ENCODE measurements at regions of chr2 and their contacts with region 1.

Region 1: DNA sequence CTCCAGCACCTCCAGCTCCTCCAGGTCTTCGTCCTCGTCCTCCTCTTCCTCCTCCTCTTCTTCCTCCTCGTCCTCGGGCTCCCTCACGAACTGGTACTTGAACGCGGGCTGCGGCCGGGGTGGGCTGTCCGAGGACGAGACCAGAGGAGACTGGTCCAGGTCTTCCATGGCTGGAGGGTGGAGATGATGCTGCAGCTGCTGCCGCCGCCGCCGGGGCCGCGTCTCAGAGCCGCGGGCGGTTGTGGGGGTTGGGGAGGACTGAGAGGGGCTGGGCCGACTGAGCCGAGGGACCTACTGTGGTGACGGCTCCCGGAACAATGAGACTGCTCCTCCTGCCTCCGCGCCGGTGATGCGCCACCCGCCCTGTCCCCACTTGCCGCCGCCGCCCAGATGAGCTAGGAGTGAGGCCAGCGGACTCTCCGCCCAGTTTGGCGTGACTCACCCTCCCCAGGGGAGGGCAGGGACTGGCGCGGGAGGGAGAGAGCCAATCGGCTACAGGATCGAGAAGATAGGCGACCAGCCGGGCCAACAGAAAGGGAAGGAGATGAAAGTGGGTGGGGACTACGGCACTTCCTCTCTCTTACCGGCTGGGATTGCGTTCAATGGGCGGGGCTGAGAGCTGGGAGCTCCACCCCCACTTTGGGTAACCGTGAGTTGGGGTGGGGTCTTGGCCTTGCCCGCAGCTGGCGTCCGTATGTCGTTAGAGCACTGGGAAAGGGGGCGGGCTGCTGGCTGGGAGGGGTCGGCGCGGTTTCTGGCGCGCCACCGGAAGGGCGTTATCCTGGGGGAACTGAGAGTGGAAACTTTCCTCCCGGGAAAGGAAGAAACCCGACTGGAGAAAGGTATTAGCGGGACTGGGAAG is at the start of gene RTN4:
- DNase-seq: peak; percentile 99
- H3K4me3 Mint-ChIP-seq: peak within 1 kb of the TSS; percentile 94
- H3K27ac Mint-ChIP-seq: peak within 1 kb of the TSS; percentile 99
- H3K4me1 Mint-ChIP-seq: peaks cover 24% of the 10 kb centered on the region
- H3K27me3 Mint-ChIP-seq: no peaks in the 10 kb centered on the region
- CTCF ChIP-seq: no peak
- total RNA-seq, gene RTN4: 389 and 391 TPM in 2 replicates

Region 2: DNA sequence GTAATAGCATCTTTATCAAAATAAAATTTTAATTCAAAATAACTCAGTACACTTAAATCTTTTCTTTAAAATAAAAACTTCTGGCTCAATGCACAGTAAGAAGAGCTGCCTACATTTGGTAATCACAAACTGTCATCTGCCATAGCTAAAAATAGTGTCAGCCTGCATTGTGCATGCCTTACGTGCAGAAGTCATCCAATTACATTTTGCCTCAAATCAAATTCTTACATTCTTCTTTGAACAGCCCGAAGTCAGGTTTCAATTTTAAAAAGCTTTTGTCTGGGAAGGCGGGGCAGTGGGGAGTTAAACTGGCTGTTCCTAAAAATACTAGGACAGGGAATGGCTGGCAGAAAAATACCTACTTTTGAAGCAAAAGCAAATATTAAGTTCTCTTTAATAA is 51.2 kb before region 1 on chr2:
- CTCF ChIA-PET with region 1: interaction called, 6 read pairs
- POLR2A ChIA-PET with region 1: interaction called, 16 read pairs
- intact Hi-C with region 1: no loop called
- DNase-seq: peak; percentile 68
- H3K4me3 Mint-ChIP-seq: peak overlapping the region; percentile 62
- H3K27ac Mint-ChIP-seq: peak overlapping the region; percentile 85
- H3K4me1 Mint-ChIP-seq: peaks cover 49% of the 10 kb centered on the region
- H3K27me3 Mint-ChIP-seq: no peaks in the 10 kb centered on the region
- CTCF ChIP-seq: no peak

Region 3: DNA sequence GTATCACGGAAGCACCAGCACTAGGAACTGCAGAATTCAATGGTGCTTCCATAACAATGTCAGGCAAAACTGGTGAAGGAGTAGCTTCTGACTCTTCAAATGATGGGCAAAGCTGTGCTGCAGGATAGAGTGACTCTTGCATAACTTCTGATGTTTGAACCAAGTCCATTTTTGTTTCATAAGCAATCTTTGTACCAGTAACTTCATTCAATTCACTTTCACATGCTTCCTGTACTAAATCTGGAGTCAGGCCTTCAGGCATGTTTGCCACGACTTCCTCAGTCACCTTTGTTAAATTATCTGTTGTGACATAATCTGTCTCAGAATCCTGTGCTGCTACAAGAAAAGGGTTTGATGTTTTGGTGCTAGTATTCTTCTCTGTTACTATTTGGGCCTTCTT is 24.2 kb before region 1 on chr2:
- CTCF ChIA-PET with region 1: interaction called, 12 read pairs
- POLR2A ChIA-PET with region 1: interaction called, 289 read pairs
- intact Hi-C with region 1: no loop called
- DNase-seq: peak; percentile 57
- H3K4me3 Mint-ChIP-seq: no peak overlapping the region
- H3K27ac Mint-ChIP-seq: no peak overlapping the region
- H3K4me1 Mint-ChIP-seq: peaks cover 7% of the 10 kb centered on the region
- H3K27me3 Mint-ChIP-seq: no peaks in the 10 kb centered on the region
- CTCF ChIP-seq: no peak

Region 4: GRCh38 chr2:55063713-55064323 is 13.5 kb after region 1 on chr2:
- CTCF ChIA-PET with region 1: interaction called, 6 read pairs
- POLR2A ChIA-PET with region 1: interaction called, 13 read pairs
- intact Hi-C with region 1: no loop called
- DNase-seq: no peak
- H3K4me3 Mint-ChIP-seq: no peak overlapping the region
- H3K27ac Mint-ChIP-seq: no peak overlapping the region
- H3K4me1 Mint-ChIP-seq: no peaks in the 10 kb centered on the region
- H3K27me3 Mint-ChIP-seq: no peaks in the 10 kb centered on the region
- CTCF ChIP-seq: peak; percentile 17

Region 5: DNA sequence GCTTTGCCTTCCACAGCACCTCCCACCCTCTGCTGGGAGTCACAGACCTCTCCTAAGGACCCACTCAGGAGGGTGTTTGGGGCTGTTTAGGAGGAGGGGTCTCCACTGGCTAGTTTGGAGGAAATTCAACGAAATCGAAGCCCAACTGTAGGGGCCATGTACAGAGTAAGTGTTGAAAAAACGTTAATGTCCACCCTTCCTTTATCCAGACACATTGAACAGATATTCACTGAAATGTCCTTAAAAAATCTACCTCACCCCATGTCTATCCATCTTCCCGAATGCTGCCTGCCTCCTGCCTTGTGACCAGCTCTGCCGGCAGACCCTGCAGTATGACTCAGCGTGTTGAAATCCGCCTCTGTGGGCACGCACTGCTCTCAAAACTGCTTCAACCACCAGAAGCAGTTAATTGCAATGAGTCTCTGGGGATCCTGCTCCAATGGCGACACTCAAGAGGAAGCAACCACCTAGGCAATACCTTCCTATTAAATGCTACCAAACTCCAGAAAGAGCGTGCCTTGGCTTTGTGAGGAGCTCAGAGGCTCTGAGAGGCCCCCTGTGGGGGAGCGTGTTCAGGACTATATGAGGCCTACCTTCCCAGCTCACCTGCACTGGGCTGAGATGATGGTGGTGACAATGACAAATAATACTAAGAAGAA is 61.3 kb after region 1 on chr2:
- CTCF ChIA-PET with region 1: interaction called, 9 read pairs
- POLR2A ChIA-PET with region 1: interaction called, 62 read pairs
- intact Hi-C with region 1: no loop called
- DNase-seq: peak; percentile 90
- H3K4me3 Mint-ChIP-seq: peak overlapping the region; percentile 2
- H3K27ac Mint-ChIP-seq: peak overlapping the region; percentile 98
- H3K4me1 Mint-ChIP-seq: peaks cover 39% of the 10 kb centered on the region
- H3K27me3 Mint-ChIP-seq: no peaks in the 10 kb centered on the region
- CTCF ChIP-seq: no peak

Region 6: DNA sequence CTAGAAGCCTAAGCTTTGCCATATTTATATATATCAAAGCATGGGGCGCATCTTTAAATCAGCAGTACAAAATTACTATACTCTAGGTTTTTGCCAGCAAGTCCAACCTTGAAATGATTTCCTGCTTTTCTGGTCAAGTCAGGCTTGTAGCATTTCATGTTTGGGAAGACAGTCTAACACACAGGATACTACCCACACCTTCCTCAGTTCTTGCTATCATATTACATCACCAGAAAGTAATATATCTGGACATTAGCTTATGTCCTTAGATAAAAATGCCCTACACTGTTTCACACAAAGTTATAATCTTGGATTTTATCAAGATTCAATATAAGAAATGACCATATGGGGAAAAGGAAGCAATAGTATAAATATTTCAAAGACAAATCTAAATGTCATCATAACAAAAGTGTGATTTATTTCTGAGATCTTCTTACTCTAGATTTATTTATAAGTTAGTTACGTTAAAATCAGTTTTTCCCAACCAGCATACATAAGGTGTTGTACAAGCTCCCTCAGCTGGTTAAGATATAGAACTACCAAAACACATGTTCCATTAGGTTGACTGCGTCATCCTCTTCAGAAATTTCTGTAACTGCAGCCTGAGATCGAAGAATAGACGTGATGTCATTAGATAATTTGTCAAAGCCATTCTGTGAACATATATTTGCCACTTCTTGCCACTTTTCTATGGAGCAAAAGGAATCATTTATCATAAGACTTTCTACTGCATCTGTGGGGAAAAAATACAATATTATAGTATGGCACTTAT is 125.1 kb after region 1 on chr2:
- CTCF ChIA-PET with region 1: interaction called, 100 read pairs
- POLR2A ChIA-PET with region 1: interaction called, 18 read pairs
- intact Hi-C with region 1: no loop called
- DNase-seq: peak; percentile 51
- H3K4me3 Mint-ChIP-seq: no peak overlapping the region
- H3K27ac Mint-ChIP-seq: peak overlapping the region; percentile 1
- H3K4me1 Mint-ChIP-seq: peaks cover 10% of the 10 kb centered on the region
- H3K27me3 Mint-ChIP-seq: no peaks in the 10 kb centered on the region
- CTCF ChIP-seq: peak; percentile 70

Measured in MCF 10A (cell line).